Right ventricle myocardium superior (tissue), 1 donor: ENCODE measurements at regions of chr1 and their contacts with region 1.

Region 1: DNA sequence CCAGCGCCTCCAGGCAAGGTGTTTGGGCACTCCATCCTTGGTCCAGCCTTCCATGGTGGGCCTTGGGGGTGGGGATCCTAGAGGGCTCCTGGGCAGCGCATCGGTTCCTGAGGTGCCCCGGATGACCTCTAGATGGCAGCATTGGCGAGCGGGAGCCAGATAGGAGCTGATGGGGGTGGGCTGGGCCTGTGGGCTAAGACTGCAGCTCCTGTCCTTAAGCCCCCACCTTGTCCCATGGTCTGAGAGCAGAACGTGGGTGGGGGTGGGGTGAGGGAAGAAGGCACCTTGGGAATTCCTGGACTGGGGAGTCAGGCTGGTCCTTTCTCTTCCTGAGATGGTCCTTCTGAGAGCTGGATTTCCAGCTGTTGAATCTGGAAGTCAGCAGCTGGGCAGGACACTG is 93.4 kb upstream of the CSF3R start:
- DNase-seq: peak; percentile 60
- ATAC-seq: peak; percentile 81

Region 2: GRCh38 chr1:37038227-37039076 is 462.3 kb after region 1 on chr1:
- intact Hi-C with region 1: loop called (anchors 10 kb)
- DNase-seq: no peak
- ATAC-seq: peak; percentile 75